ENCODE measurements at regions of chr11 and their contacts with region 1.

Region 1: DNA sequence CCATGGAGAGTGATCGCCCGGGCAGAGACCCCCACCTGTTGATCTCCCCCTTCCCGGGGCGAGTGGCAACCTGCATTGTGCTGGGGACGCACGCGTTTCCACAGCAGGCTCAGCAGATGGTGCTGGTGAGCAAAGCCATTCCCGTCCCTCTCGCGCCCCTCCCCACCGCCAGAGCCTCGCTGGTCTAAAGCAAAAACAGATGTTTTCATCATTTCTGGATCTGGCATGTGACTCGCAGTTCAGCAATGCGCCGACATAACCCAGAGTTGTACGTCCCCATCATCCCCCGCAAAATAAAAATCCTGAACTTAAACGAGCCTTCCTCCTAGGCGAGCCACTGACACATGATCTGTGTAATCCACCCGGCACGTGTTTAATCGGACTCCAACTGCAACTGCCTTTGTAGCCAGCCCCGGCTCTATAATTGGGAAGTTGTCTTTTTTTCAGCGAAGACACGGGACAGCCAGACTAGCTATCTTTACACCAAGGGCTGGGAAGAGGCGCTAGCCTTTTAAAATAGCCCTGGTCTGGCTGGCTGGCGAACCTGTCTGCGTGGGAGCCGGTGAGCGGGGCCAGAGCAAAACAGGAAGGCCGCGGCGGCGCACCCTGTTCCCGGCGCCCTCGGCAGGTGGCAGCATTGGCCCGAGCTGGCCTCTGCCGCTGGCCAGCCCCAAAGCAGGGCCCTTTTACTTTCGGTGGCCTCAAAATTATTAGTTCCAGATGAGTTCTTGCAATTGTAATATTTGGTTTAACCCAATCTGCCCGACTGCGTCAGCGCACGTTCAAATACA is 203.0 kb upstream of the SORL1-AS1 start:
- DNase-seq: peak; percentile 87 to 93 (median 91)
- ATAC-seq: peak; percentile 90 to 96 (median 94)
- H3K4me3 ChIP-seq: peak overlapping the region; percentile 12 to 62 (median 50)
- H3K27ac ChIP-seq: peak overlapping the region; percentile 82 to 96 (median 93)
- H3K4me1 ChIP-seq: peaks cover 0 to 21% (median 12%) of the 10 kb centered on the region in 12 donors
- H3K27me3 ChIP-seq: no peaks in the 10 kb centered on the region
- CTCF ChIP-seq: peak; percentile 76 to 89 (median 84)
- POLR2A ChIP-seq: no peak

Region 2: DNA sequence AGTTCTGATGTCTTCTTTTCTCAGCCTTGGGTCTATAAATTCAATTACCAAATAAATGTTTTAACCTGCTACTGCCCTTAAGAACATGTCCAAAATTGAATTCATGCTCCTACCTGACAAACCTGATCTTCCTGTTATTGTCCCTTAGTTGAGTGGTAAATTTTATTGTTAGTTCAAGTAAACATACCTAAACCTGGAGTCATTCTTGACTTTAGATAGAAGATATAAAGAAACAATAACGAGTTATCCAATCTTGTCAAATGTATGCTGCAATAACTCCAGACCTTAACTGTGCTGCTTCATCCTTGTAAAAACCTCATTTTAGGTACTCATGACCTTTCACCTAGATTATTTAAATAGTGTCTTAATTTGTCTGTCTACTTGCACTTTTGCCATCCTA is 397.7 kb before region 1 on chr11:
- intact Hi-C with region 1: no loop called
- DNase-seq: no peak
- ATAC-seq: no peak
- H3K4me3 ChIP-seq: no peak overlapping the region
- H3K27ac ChIP-seq: no peak overlapping the region
- H3K4me1 ChIP-seq: no peaks in the 10 kb centered on the region
- H3K27me3 ChIP-seq: peaks cover 0 to 5% (median 0%) of the 10 kb centered on the region in 9 donors
- CTCF ChIP-seq: no peak
- POLR2A ChIP-seq: no peak

Region 3: DNA sequence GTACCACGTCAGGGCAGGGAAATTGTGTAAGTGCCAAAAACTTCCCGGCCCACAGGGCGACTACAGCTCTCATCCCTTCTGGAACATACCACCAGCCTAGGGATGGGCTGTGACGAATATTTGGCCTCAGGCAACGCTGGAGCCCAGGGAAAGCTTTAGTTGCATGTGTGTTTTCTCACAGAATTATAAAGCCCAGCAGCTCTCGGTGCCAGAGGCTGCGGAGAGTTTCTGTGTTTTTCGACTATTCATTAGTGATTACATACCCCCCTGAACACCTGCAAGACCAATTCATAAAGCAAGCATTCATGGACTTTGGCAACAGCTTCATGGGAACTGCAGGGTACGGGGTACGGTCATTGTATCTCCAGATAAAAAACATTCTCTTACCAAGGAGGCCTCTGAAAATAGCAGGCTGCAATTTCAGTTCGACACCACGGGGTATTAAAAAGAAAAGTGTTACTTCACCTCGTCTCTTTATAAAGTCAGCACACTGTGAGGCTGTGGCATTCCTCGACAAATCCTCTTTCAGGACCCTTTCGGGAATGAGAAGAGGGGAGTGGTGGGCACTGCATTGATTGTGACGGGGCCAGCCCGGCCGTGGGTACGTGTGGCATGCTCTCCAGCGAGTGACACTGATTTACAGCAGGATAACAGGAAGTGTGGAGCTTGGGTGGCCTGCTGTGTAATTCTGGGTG is 40.6 kb after region 1 on chr11:
- intact Hi-C with region 1: loop called in 1 of 10 experiments (anchors 2 kb)
- DNase-seq: peak in 4 of 5 donors; percentile 35 to 53 (median 40)
- ATAC-seq: peak; percentile 78 to 87 (median 84)
- H3K4me3 ChIP-seq: peak overlapping the region in 6 of 12 donors; percentile 3 to 32 (median 18)
- H3K27ac ChIP-seq: peak overlapping the region; percentile 59 to 94 (median 79)
- H3K4me1 ChIP-seq: peaks cover 0 to 26% (median 5%) of the 10 kb centered on the region in 12 donors
- H3K27me3 ChIP-seq: no peaks in the 10 kb centered on the region
- CTCF ChIP-seq: no peak
- POLR2A ChIP-seq: no peak

Region 4: DNA sequence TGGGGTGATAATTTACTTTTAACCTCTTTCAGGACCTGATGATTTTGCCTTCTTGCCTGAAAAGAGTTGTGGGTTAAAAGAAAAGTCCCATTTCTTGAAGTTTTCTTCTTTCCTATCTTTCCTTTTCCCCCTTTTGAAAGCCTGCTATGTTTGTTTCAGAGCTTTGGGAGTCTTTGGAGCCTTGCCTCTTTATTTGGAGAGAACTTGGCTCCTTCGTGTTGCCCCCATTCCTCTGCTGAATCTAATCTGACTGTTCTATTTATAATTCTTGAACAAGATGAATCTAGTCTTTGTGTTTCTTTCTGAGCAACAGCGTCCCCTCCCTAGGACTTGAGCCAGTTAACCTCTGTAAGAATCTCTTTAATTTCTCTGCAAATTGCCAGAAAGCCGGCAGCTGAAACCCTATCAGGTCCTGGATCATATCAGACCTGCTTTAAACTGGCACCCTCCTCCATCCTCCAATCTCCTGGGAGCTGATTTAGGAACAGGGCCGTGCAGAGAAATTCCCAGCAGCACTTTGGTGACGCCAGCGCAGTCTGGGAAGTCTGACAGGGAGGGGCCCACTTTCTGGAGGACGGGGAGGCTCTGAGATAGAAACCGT is 86.1 kb after region 1 on chr11:
- intact Hi-C with region 1: loop called in 5 of 10 experiments (anchors 1 to 5 kb)
- DNase-seq: peak; percentile 76 to 90 (median 79)
- ATAC-seq: peak; percentile 88 to 97 (median 96)
- H3K4me3 ChIP-seq: peak overlapping the region in 5 of 12 donors; percentile 5 to 19 (median 14)
- H3K27ac ChIP-seq: peak overlapping the region; percentile 68 to 91 (median 84)
- H3K4me1 ChIP-seq: peaks cover 0 to 28% (median 19%) of the 10 kb centered on the region in 12 donors
- H3K27me3 ChIP-seq: no peaks in the 10 kb centered on the region
- CTCF ChIP-seq: peak in 6 of 12 donors; percentile 7 to 27 (median 18)
- POLR2A ChIP-seq: no peak

Region 5: GRCh38 chr11:122020902-122021301 is 365.2 kb after region 1 on chr11:
- intact Hi-C with region 1: loop called in 6 of 10 experiments (anchors 5 to 10 kb)
- DNase-seq: no peak
- ATAC-seq: no peak
- H3K4me3 ChIP-seq: no peak overlapping the region
- H3K27ac ChIP-seq: no peak overlapping the region
- H3K4me1 ChIP-seq: peaks cover 0 to 9% (median 0%) of the 10 kb centered on the region in 12 donors
- H3K27me3 ChIP-seq: no peaks in the 10 kb centered on the region
- CTCF ChIP-seq: peak; percentile 19 to 61 (median 44)
- POLR2A ChIP-seq: no peak

Region 6: DNA sequence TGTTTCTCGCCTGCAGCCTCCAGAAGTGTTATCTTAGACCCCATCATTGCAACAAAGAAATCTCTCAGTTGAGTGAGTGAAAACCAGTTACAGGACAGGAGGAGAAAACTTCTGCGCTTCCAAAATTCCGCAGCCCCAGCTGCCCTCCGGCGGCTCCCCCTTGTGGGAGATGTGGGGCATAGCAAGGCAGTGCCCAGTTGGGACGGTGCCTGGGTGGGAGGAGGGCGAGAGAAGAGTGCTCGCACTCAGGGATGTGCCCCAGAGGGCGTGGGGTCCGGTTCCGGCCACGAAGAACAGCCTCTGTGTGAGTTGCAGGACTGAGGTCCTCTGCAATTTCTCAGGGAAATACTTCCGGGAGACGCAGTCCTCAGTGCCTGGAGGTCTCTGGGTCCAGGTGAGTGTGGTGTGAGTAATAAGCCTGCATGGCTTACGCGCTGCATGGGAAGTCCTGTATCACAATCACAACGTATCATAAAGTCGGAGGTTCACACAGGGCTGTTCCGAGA is 547.3 kb after region 1 on chr11:
- intact Hi-C with region 1: loop called (anchors 1 to 5 kb)
- DNase-seq: peak; percentile 63 to 84 (median 66)
- ATAC-seq: peak; percentile 65 to 89 (median 85)
- H3K4me3 ChIP-seq: peak overlapping the region in 10 of 12 donors; percentile 15 to 59 (median 40)
- H3K27ac ChIP-seq: peak overlapping the region in 6 of 12 donors; percentile 32 to 50 (median 44)
- H3K4me1 ChIP-seq: peaks cover 0 to 64% (median 27%) of the 10 kb centered on the region in 12 donors
- H3K27me3 ChIP-seq: no peaks in the 10 kb centered on the region
- CTCF ChIP-seq: peak; percentile 93 to 100 (median 97)
- POLR2A ChIP-seq: no peak

Region 7: GRCh38 chr11:122309262-122309925 is 653.7 kb after region 1 on chr11:
- intact Hi-C with region 1: loop called in 1 of 10 experiments (anchors 10 kb)
- DNase-seq: peak in 3 of 5 donors; percentile 23 to 35 (median 33)
- ATAC-seq: peak; percentile 82 to 96 (median 90)
- H3K4me3 ChIP-seq: peak overlapping the region; percentile 0 to 57 (median 46)
- H3K27ac ChIP-seq: peak overlapping the region in 11 of 12 donors; percentile 3 to 90 (median 62)
- H3K4me1 ChIP-seq: peaks cover 0 to 33% (median 3%) of the 10 kb centered on the region in 12 donors
- H3K27me3 ChIP-seq: no peaks in the 10 kb centered on the region
- CTCF ChIP-seq: no peak
- POLR2A ChIP-seq: peak in 1 of 2 donors; percentile 34

Measured in heart left ventricle (tissue), 16 donors.